PC-3 (cell line): ENCODE measurements at regions of chr14 and their contacts with region 1.

Region 1: DNA sequence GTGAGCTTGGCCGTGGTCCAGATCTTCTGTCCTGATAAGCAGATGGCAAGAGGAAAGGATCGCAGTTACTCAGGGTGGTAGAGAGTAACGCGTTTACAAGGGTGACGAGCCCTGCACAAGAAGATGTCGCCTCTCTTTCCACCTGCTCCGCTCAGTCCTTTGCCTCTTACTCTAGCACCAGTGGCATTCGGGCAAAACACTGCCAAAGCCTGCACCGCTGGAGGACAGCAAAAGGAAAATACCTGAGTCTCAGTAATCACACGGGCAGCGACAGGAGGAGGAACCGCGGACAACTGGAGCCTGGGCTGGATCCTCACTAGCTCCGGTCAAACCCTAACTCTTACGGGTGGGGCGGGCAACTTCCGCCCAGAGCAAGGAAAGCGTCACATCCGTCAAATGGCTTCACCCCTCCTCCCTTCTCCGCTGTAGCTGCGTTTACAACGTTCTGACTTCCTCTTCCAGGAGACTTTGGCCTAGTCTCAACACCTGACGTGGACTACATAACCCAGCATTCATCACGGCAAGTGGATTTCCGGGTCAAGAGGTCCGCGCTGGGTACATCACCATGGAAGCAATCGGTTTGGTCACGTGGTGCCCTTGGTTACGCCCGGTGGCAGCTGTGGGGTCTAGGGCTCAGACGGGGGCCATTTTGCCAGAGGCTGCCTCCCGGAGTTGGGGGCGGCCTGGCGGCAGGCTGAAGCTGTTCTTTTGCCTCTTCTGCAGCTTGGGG is at the starts of genes KLHL28 and TOGARAM1:
- DNase-seq: peak; percentile 100
- ATAC-seq: peak; percentile 85
- H3K4me3 ChIP-seq: peak within 1 kb of the TSS; percentile 89
- H3K27ac ChIP-seq: peak within 1 kb of the TSS; percentile 62
- H3K4me1 ChIP-seq: peaks cover 35% of the 10 kb centered on the region
- H3K27me3 ChIP-seq: no peaks in the 10 kb centered on the region
- CTCF ChIP-seq: no peak
- total RNA-seq, gene KLHL28: 2.4 and 2.5 TPM in 2 replicates
- total RNA-seq, gene TOGARAM1: 5.8 and 6.3 TPM in 2 replicates

Region 2: DNA sequence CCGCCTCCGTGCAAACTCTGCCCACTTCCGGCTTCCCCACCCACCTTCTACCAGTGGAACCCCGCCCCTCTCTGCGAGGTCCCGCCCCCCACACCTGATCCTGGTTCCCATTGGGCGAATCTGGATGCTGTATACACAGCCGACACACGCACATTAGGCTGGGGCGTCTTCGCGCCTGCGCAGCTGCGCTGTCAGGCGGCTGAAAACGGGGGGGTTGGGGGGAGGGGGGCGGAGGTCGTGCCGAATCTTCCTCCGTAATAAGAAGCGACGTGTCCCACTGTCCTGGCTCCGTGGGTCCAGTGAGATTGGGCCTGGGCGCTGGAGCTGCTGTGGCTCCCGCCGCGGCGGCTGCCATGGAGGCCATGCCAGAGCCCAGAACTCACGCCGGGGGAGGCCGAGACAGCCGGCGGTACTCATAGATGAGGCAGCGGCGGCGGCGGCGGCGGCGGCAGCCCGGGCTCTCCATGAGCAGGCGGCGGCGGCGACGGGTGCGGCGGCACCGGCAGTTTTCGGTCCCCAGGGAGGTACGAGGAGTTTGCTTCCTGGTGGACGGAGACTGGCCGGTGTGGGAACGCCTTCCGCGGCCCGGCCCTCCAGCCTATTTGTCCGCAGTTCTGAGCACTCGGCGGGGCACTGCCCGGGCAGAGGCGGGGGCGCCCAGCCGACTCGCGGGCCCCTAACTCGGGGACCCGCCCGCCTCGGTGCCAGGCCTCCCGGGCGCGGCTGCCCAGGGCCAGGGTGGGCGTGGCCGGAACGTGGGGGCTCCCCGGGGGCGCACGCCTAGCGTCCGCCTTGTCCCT is 64.5 kb before region 1 on chr14:
- CTCF ChIA-PET with region 1: no interaction called
- POLR2A ChIA-PET with region 1: no interaction called
- intact Hi-C with region 1: loop called (anchors 1 kb)
- DNase-seq: peak; percentile 98
- ATAC-seq: peak; percentile 93
- H3K4me3 ChIP-seq: peak overlapping the region; percentile 81
- H3K27ac ChIP-seq: peak overlapping the region; percentile 68
- H3K4me1 ChIP-seq: peaks cover 16% of the 10 kb centered on the region
- H3K27me3 ChIP-seq: no peaks in the 10 kb centered on the region
- CTCF ChIP-seq: no peak

Region 3: DNA sequence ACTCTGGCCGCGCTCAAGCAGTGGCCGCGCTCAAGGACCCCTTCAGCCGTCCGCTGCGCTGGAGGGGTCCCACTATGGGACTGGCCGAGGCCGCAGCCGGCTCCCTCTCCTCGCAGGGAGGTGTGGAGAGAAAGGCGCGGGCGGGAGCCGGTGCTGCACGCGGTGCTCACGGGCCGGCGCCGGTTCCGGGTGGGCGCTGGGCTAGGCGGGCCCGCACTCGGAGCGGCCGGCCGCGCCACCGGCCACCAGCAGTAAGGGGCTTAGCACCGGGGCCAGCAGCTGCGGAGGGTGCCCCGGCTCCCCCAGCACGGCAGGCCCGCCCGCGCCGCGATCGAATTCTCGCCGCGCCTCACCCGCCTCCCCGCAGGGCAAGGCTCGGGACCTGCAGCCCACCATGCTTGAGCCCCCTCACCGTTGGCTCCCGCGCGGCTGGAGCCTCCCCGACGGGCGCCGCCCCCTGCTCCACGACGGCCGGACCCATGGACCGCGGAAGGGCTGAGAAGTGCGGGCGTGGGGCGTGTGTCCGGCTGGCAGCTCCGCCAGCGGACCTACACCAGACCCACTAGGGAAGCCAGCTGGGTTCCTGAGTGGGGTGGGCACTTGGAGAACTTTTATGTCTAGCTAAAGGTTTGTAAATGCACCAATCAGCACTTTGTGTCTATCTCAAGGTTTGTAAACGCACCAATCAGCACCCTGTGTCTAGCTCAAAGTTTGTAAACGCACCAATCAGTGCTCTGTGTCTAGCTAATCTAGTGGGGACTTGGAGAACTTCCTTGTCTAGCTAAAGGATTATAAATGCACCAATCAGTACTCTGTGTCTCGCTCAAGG is 49.5 kb before region 1 on chr14:
- CTCF ChIA-PET with region 1: interaction called, 5 read pairs
- POLR2A ChIA-PET with region 1: no interaction called
- intact Hi-C with region 1: loop called (anchors 2 kb)
- DNase-seq: no peak
- ATAC-seq: no peak
- H3K4me3 ChIP-seq: no peak overlapping the region
- H3K27ac ChIP-seq: no peak overlapping the region
- H3K4me1 ChIP-seq: 0 out of 2 replicates have a peak, but pooled peaks cover 4% of the 10 kb centered on the region
- H3K27me3 ChIP-seq: no peaks in the 10 kb centered on the region
- CTCF ChIP-seq: no peak

Region 4: DNA sequence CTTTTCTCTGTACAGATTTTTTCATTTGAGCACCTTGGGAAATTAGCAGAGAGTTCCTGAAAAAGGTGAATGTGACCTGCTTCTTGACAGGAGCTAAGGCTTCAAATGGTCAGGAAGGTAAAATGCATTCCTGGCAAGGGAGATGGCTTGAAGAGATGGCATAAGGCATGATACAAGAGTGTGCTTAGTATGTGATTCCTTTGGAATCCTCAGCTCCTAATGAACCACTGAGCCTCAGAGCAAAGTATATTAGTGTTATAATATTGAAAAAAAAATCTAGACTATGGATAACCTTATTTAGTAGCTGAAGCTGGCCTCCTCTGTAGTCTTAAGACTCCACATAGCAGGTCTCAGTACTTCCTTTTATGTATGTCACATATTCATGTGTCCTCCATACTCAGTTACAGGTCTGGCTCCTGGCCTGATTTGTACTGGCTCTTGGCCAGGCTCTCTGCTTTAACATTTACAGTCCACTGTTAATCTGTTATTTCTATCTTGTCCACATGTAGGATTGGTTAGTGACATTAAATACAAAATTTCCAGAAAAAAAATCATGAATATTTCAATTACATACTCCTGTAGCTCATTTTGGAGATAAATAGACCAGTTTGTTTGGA is 18.1 kb after region 1 on chr14:
- CTCF ChIA-PET with region 1: no interaction called
- POLR2A ChIA-PET with region 1: interaction called, 11 read pairs
- intact Hi-C with region 1: loop called (anchors 2 kb)
- DNase-seq: no peak
- ATAC-seq: peak; percentile 43; the same call in 1 of the 2 replicates
- H3K4me3 ChIP-seq: no peak overlapping the region
- H3K27ac ChIP-seq: no peak overlapping the region
- H3K4me1 ChIP-seq: no peaks in the 10 kb centered on the region
- H3K27me3 ChIP-seq: no peaks in the 10 kb centered on the region
- CTCF ChIP-seq: no peak

Region 5: DNA sequence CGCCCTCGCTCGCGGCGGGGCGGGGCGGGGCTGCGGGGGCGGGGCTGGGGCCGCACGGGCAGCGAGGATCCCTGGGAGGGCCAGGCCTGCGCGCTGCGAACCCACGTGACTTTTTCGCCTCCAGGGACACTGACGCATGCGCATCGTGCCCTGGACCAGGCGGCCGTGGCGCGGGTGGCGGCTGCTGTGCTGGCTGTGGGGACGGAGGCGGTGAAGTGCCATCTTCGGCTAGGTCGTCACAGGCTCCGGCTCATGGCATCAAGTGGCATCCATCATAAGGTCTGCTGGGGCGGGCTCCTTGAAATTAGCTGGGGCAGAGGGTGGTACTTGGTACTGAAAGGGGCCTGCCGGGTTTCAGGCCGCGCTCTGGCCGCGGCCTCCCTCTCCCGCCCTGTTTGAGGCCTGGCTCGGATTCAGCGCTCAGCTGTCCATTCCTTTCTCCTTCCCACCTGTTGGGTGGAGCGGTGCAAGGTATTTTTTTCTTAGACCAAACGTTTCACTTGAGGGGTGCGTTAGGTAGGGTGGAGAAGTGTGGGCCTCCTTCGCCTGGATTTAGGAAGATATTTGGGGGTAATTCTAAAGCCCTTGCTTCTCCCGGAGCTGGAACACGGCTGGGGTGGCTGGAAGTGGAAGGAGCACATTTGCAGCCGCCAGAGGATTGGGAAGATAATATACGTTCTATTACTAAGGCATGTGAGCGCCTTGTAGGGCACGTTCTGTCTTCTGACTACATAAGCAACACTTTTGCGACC is 122.4 kb after region 1 on chr14 and contains the start of gene PRPF39:
- CTCF ChIA-PET with region 1: no interaction called
- POLR2A ChIA-PET with region 1: no interaction called
- intact Hi-C with region 1: loop called (anchors 1 kb)
- DNase-seq: peak; percentile 97
- ATAC-seq: peak; percentile 85
- H3K4me3 ChIP-seq: peak within 1 kb of the TSS; percentile 99
- H3K27ac ChIP-seq: peak within 1 kb of the TSS; percentile 60
- H3K4me1 ChIP-seq: peaks cover 29% of the 10 kb centered on the region; the same call in 1 of the 2 replicates
- H3K27me3 ChIP-seq: no peaks in the 10 kb centered on the region
- CTCF ChIP-seq: no peak
- total RNA-seq, gene PRPF39: 16.9 and 19.2 TPM in 2 replicates

Region 6: DNA sequence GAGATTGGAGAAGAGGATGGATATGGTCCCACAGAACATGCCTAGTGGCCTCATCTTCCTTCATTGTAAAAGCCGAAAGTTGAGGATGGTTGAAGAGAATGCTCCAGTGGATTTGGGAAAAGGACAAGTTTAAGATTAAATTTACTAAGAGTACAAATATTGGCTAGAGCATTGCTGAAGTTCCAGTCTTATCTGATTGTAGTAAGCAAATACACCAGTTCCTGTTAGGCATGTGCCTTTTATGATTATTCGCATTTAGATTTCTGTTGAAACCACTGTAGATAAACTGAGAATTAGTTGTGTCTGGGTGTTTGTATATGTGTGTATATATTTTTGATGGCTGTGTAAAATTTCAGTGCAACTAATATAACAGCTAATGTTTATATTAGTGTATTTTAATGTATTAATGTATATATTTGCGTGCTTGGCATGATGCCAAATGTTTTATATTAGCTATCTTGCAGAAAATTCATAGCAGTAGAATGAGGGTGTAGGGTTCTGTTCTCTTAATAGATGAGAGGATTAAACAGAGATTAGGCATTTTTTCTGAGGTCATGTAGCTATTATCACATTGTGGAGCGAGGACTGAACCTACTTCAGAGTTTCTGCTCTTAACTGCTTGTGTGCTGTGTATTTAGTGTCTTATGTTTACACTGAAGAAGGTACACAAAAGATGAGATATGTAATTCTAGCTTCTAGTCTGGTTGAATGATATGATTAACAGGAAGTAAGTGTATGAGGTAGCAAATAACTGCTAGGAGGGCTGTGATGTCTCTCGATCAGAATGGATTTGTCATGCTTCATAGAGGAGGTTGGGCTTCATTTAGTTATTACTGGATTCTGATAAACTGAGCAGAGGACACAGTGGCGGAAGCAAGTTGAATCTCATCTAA is 151.4 kb after region 1 on chr14:
- CTCF ChIA-PET with region 1: no interaction called
- POLR2A ChIA-PET with region 1: no interaction called
- intact Hi-C with region 1: loop called (anchors 1 kb)
- DNase-seq: peak; percentile 88
- ATAC-seq: peak; percentile 95
- H3K4me3 ChIP-seq: peak overlapping the region; percentile 6; the same call in 1 of the 2 replicates
- H3K27ac ChIP-seq: peak overlapping the region; percentile 49
- H3K4me1 ChIP-seq: peaks cover 24% of the 10 kb centered on the region
- H3K27me3 ChIP-seq: no peaks in the 10 kb centered on the region
- CTCF ChIP-seq: no peak

Region 7: GRCh38 chr14:45253068-45253753 is 291.4 kb after region 1 on chr14 and contains the start of gene MIS18BP1:
- CTCF ChIA-PET with region 1: no interaction called
- POLR2A ChIA-PET with region 1: interaction called, 11 read pairs
- intact Hi-C with region 1: loop called (anchors 5 kb)
- DNase-seq: peak; percentile 97
- ATAC-seq: peak; percentile 92
- H3K4me3 ChIP-seq: peak within 1 kb of the TSS; percentile 71
- H3K27ac ChIP-seq: peak within 1 kb of the TSS; percentile 84
- H3K4me1 ChIP-seq: peaks cover 23% of the 10 kb centered on the region
- H3K27me3 ChIP-seq: no peaks in the 10 kb centered on the region
- CTCF ChIP-seq: peak; percentile 82
- total RNA-seq, gene MIS18BP1: 39.3 and 42.3 TPM in 2 replicates